Heart left ventricle (tissue), 16 donors: ENCODE measurements at regions of chr1 and their contacts with region 1.

Region 1: DNA sequence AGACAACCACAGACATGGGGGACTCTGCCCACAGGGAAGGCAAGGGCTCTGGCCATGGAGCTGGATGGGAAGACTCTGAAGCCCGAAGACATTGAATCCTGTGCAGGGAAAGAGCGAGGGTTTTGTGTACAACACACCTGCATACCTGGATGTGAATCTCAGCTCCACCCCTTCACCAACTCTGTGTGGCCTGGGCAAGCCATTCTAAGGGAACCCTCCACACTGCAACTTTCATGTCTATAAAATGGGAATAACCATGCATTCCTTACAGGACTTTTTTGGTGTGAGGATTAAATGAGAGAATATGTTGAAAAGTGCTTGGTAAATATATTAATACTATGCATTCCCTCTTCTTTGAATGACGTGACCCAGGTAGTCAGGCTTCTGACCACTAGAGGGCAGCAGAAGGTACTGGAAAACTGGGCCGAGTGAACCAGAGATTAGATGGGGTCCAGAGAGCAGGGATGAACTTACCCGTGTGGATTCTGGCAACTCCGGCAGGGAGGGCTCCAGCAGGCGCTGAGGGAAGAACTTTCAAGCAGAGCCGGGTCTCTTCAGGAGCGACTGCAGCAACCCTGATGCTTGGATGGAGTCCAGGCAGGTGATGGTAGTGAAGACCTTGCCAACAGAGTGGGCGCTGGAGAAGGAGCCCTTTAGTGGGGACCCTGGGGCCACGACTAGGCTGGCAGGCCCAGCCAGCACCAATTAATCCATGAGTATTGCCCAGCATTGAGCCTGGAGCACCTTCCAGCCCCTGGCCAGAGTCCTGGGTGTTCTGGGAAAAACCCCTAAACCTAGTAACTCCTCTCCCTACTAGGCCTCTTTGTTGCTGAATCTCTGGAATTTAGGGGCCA is 834 bp upstream of the ELF3 start:
- DNase-seq: peak in 4 of 5 donors; percentile 65 to 75 (median 68)
- ATAC-seq: peak; percentile 32 to 79 (median 64)
- H3K4me3 ChIP-seq: no peak overlapping the region
- H3K27ac ChIP-seq: peak overlapping the region in 2 of 12 donors; percentile 10 to 66
- H3K4me1 ChIP-seq: peaks cover 0 to 15% (median 4%) of the 10 kb centered on the region in 12 donors
- H3K27me3 ChIP-seq: no peaks in the 10 kb centered on the region
- CTCF ChIP-seq: peak; percentile 81 to 92 (median 87)
- POLR2A ChIP-seq: no peak

Region 2: DNA sequence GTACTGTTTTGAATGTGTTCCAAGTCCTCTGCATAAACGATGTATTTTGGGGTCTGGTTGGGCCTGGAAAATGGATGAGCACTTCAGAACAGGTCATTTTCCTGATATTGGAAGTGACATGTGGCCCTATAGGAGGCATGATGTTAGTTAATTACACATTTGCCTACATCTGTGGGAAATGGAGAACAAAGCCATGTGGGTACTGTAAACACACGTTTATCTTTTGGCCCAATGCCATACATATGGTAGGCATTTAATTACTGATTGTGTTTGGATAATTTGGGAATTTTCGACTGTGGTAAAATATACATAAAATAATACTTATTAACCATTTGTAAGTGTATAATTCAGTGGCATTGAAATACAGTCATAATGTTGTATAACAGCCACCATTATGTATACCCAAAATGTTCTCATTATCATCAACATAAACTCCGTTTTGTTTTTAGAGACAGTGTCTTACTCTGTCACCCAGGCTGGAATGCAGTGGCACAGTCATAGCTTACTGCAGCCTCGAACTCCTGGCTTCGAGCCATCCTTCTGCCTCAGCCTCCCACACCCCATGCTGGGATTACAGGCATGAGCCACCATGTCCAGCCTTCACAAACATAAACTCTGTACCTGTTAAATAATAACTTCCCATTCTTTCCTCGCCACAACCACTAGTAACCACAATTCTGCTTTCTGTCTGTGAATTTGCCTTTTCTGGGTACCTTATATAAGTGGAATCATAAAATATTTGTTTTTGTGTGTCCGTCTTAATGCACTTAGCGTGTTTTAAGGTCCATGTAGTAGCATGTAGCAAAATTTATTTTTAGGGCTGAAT is 39.0 kb before region 1 on chr1:
- intact Hi-C with region 1: no loop called
- DNase-seq: no peak
- ATAC-seq: peak in 2 of 4 donors; percentile 36 to 37
- H3K4me3 ChIP-seq: no peak overlapping the region
- H3K27ac ChIP-seq: no peak overlapping the region
- H3K4me1 ChIP-seq: peaks cover 0 to 14% (median 5%) of the 10 kb centered on the region in 12 donors
- H3K27me3 ChIP-seq: no peaks in the 10 kb centered on the region
- CTCF ChIP-seq: no peak
- POLR2A ChIP-seq: no peak

Region 3: DNA sequence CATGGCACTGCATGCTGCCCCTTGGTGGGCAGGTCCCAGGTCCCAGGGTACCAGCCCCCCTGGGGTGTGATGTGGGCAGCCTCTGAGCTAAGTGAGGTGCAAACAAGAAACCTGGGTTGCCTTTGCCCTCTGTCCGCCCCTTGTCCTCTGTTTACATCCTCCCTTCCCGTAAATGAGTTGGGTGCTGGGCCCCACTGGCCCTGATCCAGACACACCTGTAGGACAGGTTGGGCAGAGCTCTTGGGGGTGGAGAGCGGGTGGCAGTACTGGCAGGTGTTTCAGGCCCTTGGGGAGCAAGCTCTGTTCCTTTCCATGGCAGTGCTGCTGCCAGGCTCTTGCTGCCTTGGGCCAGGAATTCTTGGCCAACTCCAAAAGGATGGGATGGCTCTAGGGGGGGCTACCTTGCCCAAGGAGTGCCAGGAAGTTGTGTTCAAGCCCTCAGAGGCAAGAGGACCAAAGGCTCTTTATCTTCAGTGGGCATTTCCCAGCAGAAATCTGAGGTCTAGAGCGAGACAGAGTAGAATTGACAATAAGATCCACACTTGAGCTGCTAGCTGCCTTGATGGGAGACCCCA is 36.8 kb after region 1 on chr1:
- intact Hi-C with region 1: loop called in 1 of 10 experiments (anchors 5 kb)
- DNase-seq: no peak
- ATAC-seq: peak in 1 of 4 donors; percentile 9
- H3K4me3 ChIP-seq: no peak overlapping the region
- H3K27ac ChIP-seq: no peak overlapping the region
- H3K4me1 ChIP-seq: peaks cover 0 to 2% (median 0%) of the 10 kb centered on the region in 12 donors
- H3K27me3 ChIP-seq: no peaks in the 10 kb centered on the region
- CTCF ChIP-seq: no peak
- POLR2A ChIP-seq: no peak

Region 4: DNA sequence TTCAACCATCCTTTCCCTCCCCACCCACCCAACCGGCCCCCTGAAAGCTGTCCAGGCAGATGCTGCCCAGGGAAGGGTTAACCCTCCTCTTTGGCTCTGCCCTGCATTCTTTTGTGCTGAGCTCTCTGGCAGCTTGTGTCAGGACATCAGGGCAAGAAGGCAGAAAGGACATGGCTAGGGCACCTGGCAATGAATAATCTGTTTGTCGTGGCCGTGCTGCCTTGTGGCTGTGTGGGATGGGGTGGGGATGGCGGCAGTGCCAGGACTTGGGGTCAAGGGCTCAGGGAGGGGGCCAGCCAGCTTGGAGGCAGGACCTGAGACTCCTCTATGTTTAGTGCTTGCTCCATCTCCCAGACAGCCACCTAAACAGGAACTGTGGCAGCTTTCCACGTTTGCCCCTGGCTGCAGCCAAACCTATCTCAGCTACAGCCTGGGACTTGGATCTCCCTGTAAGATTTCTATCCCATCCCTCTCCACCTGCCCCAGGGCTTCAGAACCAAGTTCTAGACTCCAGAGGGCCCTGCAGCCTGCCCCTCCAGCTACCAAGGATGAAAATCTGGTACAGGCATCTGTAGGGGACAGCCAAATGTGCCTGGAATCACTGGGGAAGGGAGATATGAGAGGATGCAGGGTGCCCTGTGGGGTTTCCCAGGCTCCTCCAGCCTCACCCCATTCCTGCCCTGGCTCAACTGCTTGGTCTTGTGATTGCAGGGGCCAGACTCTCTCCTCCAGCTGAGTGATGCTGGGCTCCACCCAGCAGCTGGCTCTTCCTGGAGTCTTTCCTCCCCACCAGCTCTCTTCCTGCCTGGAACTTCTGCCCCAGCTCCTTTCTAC is 103.5 kb after region 1 on chr1:
- intact Hi-C with region 1: loop called in 8 of 10 experiments (anchors 2 to 5 kb)
- DNase-seq: peak in 4 of 5 donors; percentile 59 to 84 (median 62)
- ATAC-seq: peak; percentile 78 to 79 (median 78)
- H3K4me3 ChIP-seq: no peak overlapping the region
- H3K27ac ChIP-seq: peak overlapping the region; percentile 27 to 88 (median 71)
- H3K4me1 ChIP-seq: peaks cover 0 to 31% (median 19%) of the 10 kb centered on the region in 12 donors
- H3K27me3 ChIP-seq: no peaks in the 10 kb centered on the region
- CTCF ChIP-seq: no peak
- POLR2A ChIP-seq: no peak

Region 5: GRCh38 chr1:202122639-202123335 is 113.2 kb after region 1 on chr1 and contains the start of gene GPR37L1:
- intact Hi-C with region 1: loop called (anchors 1 to 5 kb)
- DNase-seq: peak in 3 of 5 donors; percentile 39 to 69 (median 60)
- ATAC-seq: peak; percentile 23 to 77 (median 70)
- H3K4me3 ChIP-seq: no peak within 1 kb of the TSS
- H3K27ac ChIP-seq: no peak within 1 kb of the TSS
- H3K4me1 ChIP-seq: peaks cover 0 to 7% (median 0%) of the 10 kb centered on the region in 12 donors
- H3K27me3 ChIP-seq: peaks cover 0 to 2% (median 0%) of the 10 kb centered on the region in 9 donors
- CTCF ChIP-seq: peak in 10 of 12 donors; percentile 14 to 64 (median 41)
- POLR2A ChIP-seq: no peak
- total RNA-seq, gene GPR37L1: 0.05 TPM in 1 of 9 donors, not detected in the others

Region 6: DNA sequence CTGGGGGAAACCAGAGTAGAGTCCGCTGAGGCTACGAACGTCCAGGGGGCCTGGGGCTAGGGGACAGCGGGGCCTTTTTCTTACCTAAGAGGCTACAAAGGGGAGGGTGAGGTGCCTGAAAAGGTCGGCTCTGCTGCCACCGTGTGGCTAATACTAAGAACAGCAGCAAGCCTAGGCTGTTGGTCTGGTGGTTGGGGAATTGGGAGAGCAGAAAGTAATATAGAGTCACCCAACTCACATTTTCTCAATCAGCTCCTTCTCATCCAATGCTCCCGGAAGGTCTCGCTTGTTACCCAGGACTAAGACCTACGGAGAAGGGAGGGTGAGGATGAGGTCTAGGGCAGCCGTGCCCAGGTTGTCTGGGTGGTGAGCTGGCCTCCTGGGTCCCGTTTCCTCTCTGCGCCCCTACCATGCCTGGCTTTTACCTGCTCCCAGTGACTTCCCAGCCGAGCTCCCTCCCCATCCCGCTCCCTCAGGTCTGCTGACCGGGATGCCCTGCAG is 125.7 kb after region 1 on chr1:
- intact Hi-C with region 1: loop called in 3 of 10 experiments (anchors 1 to 5 kb)
- DNase-seq: peak in 3 of 5 donors; percentile 48 to 57 (median 50)
- ATAC-seq: peak; percentile 42 to 71 (median 56)
- H3K4me3 ChIP-seq: no peak overlapping the region
- H3K27ac ChIP-seq: peak overlapping the region in 2 of 12 donors; percentile 28 to 66
- H3K4me1 ChIP-seq: peaks cover 4 to 30% (median 19%) of the 10 kb centered on the region in 12 donors
- H3K27me3 ChIP-seq: no peaks in the 10 kb centered on the region
- CTCF ChIP-seq: peak; percentile 77 to 92 (median 85)
- POLR2A ChIP-seq: no peak